PC-9 (cell line): ENCODE measurements at regions of chr5 and their contacts with region 1.

Region 1: DNA sequence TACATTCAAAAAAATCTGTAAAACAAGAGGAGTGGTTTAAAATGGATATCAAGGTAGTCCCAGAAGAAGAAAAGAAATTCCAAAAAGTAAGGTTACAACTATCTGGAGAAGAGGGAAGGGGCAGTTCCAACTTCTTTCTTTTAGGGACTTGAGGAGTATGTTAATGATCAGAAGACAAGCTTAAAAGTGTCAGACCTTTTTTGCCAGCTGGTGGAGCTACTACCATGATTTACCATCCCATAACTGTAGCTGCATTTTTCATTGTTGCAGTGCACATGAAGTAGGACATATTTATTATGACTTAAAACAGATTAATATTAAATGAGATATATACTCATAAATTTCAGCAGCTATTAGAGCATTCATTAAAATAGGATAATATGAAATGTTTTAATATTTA is 158.5 kb upstream of the RGS7BP start:
- DNase-seq: no peak
- H3K4me3 ChIP-seq: no peak overlapping the region
- H3K27ac ChIP-seq: no peak overlapping the region
- H3K4me1 ChIP-seq: no peaks in the 10 kb centered on the region
- H3K27me3 ChIP-seq: no peaks in the 10 kb centered on the region
- CTCF ChIP-seq: no peak

Region 2: GRCh38 chr5:64497386-64497785 is 150.1 kb after region 1 on chr5:
- CTCF ChIA-PET with region 1: no interaction called
- POLR2A ChIA-PET with region 1: no interaction called
- intact Hi-C with region 1: no loop called
- DNase-seq: no peak
- H3K4me3 ChIP-seq: no peak overlapping the region
- H3K27ac ChIP-seq: no peak overlapping the region
- H3K4me1 ChIP-seq: 0 out of 2 replicates have a peak, but pooled peaks cover 4% of the 10 kb centered on the region
- H3K27me3 ChIP-seq: no peaks in the 10 kb centered on the region
- CTCF ChIP-seq: no peak

Region 3: GRCh38 chr5:64603676-64604075 is 256.4 kb after region 1 on chr5:
- CTCF ChIA-PET with region 1: interaction called, 9 read pairs
- POLR2A ChIA-PET with region 1: no interaction called
- intact Hi-C with region 1: loop called (anchors 10 kb)
- DNase-seq: no peak
- H3K4me3 ChIP-seq: no peak overlapping the region
- H3K27ac ChIP-seq: no peak overlapping the region
- H3K4me1 ChIP-seq: no peaks in the 10 kb centered on the region
- H3K27me3 ChIP-seq: 0 out of 2 replicates have a peak, but pooled peaks cover 3% of the 10 kb centered on the region
- CTCF ChIP-seq: no peak